ENCODE measurements at regions of chr4 and their contacts with region 1.

Region 1: DNA sequence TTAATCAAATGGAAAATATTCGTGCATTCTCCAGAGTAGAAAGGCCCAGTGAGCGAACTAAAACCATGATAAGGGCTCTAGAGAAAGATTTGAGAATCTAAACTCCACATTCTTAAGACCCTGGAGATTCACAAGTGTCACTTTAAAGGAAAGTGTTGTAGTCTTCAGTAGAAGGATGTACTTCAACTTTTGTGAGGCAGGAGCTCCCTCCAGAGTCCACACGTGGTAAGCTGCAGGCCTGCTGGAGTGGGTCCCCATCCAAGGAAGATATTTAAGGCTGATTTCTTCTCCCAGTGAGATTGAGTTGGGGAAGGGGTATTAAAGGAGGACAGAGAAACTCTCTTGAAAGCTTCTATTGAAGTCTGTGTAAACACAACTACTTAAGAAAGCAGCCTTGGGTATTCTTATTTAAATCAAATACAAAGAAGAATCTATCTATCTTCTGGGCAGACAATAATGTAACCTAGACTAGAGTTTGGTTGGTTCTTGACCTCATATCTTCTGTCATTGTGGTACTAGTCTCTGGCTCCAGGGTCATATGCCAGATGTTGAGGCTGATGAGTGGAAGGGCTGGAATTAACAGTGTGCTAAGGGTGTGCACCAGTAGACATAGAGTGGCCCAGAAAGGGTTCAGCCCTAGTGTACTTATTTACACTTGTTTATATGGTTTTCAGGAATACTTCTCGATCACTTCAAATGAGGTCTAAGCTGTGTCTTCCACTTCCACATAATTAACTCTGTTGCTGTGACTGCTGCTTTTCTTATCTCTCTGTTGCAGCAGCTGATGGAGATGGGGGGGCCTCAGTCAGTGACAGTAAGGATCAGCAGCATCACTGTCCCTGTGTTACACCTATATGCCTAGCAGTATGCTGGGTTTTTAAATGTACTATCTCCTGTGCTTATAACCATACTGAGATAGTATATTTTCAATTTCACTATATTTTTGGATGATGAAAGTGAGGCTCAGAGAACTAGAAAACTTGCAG is 76.1 kb downstream of the HMGB2 start:
- DNase-seq: peak; percentile 70 to 74
- H3K4me3 ChIP-seq: no peak overlapping the region
- H3K4me1 ChIP-seq: no peaks in the 10 kb centered on the region
- H3K27me3 ChIP-seq: no peaks in the 10 kb centered on the region

Region 2: DNA sequence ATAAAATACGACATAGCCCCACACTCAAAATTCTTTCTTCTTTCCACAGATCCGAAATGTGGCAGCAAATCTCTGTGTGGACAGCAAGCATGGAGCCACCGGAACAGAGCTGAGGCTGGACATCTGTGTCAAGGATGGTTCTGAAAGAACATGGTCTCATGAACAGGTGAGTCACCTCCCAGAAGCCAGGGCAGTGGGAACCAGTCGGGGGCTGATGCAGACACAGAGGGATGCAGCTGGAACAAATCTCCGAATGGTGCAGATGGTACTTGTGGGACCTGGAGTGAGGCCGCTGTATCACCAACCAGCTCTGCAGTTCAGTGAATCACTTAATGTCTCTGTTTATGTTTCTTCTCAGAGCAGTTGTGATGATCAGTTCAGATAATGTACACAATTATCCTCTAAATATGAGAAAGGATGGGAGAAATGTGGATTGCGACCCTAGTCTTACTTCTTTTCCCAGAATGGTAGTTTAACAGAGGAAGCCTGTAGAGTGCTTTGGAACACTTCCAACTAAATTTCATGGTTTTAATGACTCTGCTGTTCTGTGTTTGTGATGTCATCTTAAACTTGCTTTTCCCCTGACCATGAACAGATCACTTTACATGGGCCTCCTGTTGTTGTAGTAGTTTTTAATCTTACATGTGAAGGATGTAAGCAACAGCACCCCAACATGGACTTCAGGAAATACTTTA is 248.7 kb before region 1 on chr4:
- in situ Hi-C with region 1: no loop called
- DNase-seq: no peak
- H3K4me3 ChIP-seq: no peak overlapping the region
- H3K4me1 ChIP-seq: no peaks in the 10 kb centered on the region
- H3K27me3 ChIP-seq: 0 out of 2 replicates have a peak, but pooled peaks cover 2% of the 10 kb centered on the region

Region 3: DNA sequence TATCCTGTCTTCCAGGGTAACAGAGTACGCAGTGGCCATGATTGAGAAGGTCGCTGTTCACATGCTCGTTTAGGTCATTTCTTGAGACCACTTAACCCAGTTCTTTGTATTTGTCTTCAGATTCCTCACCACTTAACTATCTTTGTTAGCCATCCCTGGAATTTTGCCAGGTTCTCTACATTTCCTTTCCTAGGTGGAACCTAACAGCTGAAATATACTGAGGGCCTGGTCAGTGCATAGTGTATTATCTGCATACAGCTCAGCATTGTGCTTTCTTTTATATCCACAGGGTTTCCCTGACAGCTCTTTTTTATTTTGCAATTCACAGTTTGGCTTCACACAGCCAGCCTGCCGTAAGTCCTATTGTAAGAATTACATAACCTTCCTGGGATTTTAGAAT is 238.3 kb before region 1 on chr4:
- in situ Hi-C with region 1: loop called (anchors 5 kb)
- DNase-seq: no peak
- H3K4me3 ChIP-seq: no peak overlapping the region
- H3K4me1 ChIP-seq: no peaks in the 10 kb centered on the region
- H3K27me3 ChIP-seq: peaks cover 8% of the 10 kb centered on the region